ENCODE measurements at regions of chr22 and their contacts with region 1.

Region 1: GRCh38 chr22:37608477-37609239 is at the start of gene GGA1:
- DNase-seq: peak; percentile 82
- ATAC-seq: peak; percentile 74
- H3K4me3 Mint-ChIP-seq: peak within 1 kb of the TSS; percentile 90
- H3K27ac Mint-ChIP-seq: peak within 1 kb of the TSS; percentile 94
- H3K4me1 Mint-ChIP-seq: peaks cover 41% of the 10 kb centered on the region
- H3K27me3 Mint-ChIP-seq: peaks cover 15% of the 10 kb centered on the region
- CTCF ChIP-seq: no peak
- total RNA-seq, gene GGA1: 102 and 126 TPM in 2 replicates

Region 2: DNA sequence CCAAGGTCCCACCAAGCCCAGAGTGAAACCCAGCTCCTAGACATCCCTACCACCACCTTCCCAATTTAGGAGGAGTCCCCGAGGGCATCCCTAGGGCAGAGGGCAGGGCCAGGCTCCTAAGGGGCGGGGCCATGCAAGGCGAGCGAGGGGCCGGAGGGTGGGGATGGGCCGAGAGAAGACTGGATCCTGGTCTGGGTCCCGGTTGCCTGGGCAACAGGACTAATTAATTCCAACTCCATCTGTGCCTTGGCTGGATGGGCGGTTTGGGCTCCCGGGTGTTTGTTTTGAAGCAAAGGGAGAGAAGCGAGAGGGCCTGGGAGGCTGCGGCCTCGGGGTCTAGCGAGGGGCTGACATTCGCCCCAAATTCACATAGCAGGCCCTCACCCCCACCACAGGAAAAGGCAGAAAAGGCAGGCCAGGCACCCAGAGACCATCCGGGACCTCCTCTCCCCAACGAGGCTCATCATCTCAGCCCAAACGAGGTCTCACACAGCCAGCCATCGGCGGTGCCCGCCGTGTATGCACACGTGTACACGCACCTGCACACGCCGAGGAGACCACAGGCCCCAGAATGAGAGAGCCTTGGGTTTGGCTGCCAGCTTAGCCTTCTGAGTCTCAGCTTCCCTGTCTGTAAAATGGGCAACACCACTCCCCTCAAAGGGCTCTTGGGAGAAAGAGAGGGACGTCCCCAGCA is 205.2 kb before region 1 on chr22:
- CTCF ChIA-PET with region 1: no interaction called
- POLR2A ChIA-PET with region 1: no interaction called
- intact Hi-C with region 1: no loop called
- DNase-seq: no peak
- ATAC-seq: no peak
- H3K4me3 Mint-ChIP-seq: no peak overlapping the region
- H3K27ac Mint-ChIP-seq: no peak overlapping the region
- H3K4me1 Mint-ChIP-seq: no peaks in the 10 kb centered on the region
- H3K27me3 Mint-ChIP-seq: peaks cover 2% of the 10 kb centered on the region
- CTCF ChIP-seq: no peak

Region 3: DNA sequence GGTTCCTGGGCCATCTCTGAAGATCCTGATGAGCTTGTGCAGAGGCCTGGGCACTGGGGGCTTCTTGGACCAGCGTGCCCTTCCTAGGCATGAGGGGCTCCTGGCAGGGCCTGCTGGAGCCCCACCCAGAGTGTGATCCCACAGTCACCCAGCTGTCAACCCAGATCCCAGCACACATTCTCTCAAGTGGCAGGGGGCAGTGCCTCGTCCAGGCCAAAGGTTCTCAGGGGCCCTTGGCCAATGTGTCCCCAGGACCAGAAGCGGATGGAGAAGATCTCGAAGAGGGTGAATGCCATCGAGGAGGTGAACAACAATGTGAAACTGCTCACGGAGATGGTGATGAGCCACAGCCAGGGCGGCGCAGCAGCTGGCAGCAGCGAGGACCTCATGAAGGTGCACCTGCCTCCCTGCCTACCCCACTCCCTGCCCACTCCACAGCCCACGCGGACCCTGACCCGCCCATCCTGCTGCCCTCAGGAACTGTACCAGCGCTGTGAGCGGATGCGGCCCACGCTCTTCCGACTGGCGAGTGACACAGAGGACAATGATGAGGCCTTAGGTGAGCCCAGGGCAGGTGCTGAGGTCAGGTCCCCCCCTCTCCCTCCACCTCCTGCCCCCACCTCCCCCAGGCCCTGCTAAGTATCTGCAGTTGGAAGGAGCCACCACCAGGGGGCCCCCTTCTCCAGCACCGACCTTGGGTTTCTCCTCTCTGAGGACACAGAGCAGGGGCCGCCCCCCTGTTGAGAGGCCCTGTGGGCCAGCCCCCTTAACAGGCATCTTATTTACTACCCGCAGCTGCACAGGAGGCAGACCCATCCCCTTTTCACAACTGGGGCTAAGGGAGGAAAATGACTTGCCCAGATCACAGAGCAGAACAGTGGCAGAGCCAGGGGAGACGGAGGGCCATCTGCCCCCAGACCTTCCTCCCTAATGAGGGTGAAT is 14.7 kb after region 1 on chr22:
- CTCF ChIA-PET with region 1: interaction called, 8 read pairs
- POLR2A ChIA-PET with region 1: interaction called, 78 read pairs
- intact Hi-C with region 1: loop called (anchors 1 kb)
- DNase-seq: peak; percentile 73
- ATAC-seq: peak; percentile 80
- H3K4me3 Mint-ChIP-seq: peak overlapping the region; percentile 24
- H3K27ac Mint-ChIP-seq: peak overlapping the region; percentile 84
- H3K4me1 Mint-ChIP-seq: peaks cover 64% of the 10 kb centered on the region
- H3K27me3 Mint-ChIP-seq: no peaks in the 10 kb centered on the region
- CTCF ChIP-seq: peak; percentile 38

Region 4: GRCh38 chr22:37676736-37677492 is 68.3 kb after region 1 on chr22:
- CTCF ChIA-PET with region 1: interaction called, 30 read pairs
- POLR2A ChIA-PET with region 1: interaction called, 88 read pairs
- intact Hi-C with region 1: loop called (anchors 1 kb)
- DNase-seq: peak; percentile 86
- ATAC-seq: peak; percentile 83
- H3K4me3 Mint-ChIP-seq: peak overlapping the region; percentile 84
- H3K27ac Mint-ChIP-seq: peak overlapping the region; percentile 91
- H3K4me1 Mint-ChIP-seq: peaks cover 66% of the 10 kb centered on the region
- H3K27me3 Mint-ChIP-seq: no peaks in the 10 kb centered on the region
- CTCF ChIP-seq: no peak

Region 5: GRCh38 chr22:37817705-37818408 is 209.2 kb after region 1 on chr22:
- CTCF ChIA-PET with region 1: interaction called, 12 read pairs
- POLR2A ChIA-PET with region 1: interaction called, 7 read pairs
- intact Hi-C with region 1: no loop called
- DNase-seq: peak; percentile 89
- ATAC-seq: peak; percentile 84
- H3K4me3 Mint-ChIP-seq: peak overlapping the region; percentile 52
- H3K27ac Mint-ChIP-seq: no peak overlapping the region
- H3K4me1 Mint-ChIP-seq: peaks cover 23% of the 10 kb centered on the region
- H3K27me3 Mint-ChIP-seq: peaks cover 17% of the 10 kb centered on the region
- CTCF ChIP-seq: peak; percentile 32

Region 6: DNA sequence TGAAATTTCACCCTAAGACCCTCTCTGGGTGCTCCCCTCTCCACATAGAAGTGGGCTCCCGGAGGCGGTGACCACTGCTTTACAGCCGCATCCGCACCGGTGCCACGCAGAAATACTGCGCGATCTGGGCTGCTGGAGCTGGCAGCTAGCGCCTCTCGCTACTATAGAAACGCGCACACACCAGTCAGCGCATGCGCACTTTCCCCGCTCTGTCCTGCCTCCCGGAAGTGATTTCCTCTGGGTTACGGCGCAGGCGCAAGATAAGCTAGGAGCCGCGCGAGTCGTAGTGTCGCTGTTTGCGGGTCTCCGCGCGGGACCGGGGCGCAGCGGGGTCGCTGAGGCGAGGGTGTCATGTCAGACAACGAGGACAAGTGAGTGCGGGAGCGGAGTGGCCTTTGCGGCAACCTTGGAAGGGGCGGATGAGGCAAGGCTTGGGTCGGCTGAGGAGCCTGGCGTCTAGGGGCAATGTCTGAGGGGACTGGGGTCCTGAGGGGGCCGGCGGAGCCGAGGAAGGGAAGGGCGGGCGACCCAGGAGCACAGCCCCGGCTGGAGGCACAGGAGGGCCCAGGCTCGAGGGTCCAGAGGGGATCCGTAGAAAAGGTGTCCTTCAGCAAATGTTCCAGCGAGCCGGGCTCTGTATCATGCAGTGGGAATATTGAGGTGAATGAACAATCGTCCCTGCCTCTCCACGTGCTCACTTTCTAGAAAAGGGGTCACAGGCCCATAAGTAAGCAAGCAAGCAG is 344.9 kb after region 1 on chr22 and contains the starts of genes C22orf23 and POLR2F:
- CTCF ChIA-PET with region 1: no interaction called
- POLR2A ChIA-PET with region 1: interaction called, 3 read pairs
- intact Hi-C with region 1: loop called (anchors 5 kb)
- DNase-seq: peak; percentile 89
- ATAC-seq: peak; percentile 93
- H3K4me3 Mint-ChIP-seq: peak within 1 kb of the TSS; percentile 100
- H3K27ac Mint-ChIP-seq: peak within 1 kb of the TSS; percentile 95
- H3K4me1 Mint-ChIP-seq: peaks cover 30% of the 10 kb centered on the region
- H3K27me3 Mint-ChIP-seq: peaks cover 14% of the 10 kb centered on the region
- CTCF ChIP-seq: no peak
- total RNA-seq, gene C22orf23: 0.16 TPM in 1 of 2 replicates, not detected in the other
- total RNA-seq, gene POLR2F: 47.8 and 67.3 TPM in 2 replicates